ENCODE measurements at regions of chr18 and their contacts with region 1.

Region 1: DNA sequence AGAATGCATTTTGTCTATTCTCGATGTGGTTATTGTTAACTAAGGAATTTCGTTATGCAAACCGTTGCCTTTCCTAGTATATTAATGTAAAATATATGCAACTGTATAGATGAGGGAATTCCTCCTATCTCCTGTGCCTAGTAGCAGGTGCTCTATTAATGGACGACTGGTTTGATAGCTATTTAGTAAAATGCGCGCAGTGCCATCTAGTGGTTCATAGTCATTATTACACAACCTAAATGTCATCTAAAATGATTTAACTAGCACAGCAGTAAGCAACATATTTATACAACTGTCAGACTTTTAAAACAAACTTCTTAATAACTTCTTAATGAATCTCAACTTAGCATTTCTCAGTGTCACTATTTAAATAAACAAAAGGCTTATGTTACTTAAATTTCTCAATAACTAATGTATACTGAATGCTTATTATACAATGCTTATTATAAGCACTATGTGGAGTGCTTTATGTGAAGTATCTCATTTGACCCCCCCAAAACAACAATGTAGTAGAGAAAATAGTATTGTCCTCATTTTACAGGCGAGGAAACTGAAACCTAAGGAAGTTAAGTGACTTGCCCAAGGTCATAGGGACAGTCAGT is 77.9 kb downstream of the DTNA start:
- DNase-seq: no peak
- H3K4me3 ChIP-seq: no peak overlapping the region
- H3K27ac ChIP-seq: no peak overlapping the region
- H3K4me1 ChIP-seq: no peaks in the 10 kb centered on the region
- H3K27me3 ChIP-seq: peaks cover 0 to 4% (median 0%) of the 10 kb centered on the region in 4 donors
- CTCF ChIP-seq: peak; percentile 39 to 76 (median 72)
- POLR2A ChIP-seq: no peak

Region 2: GRCh38 chr18:34661464-34662111 is 126.4 kb before region 1 on chr18:
- intact Hi-C with region 1: loop called (anchors 10 kb)
- DNase-seq: no peak
- H3K4me3 ChIP-seq: no peak overlapping the region
- H3K27ac ChIP-seq: peak overlapping the region in 1 of 4 donors; percentile 61
- H3K4me1 ChIP-seq: peaks cover 0 to 23% (median 0%) of the 10 kb centered on the region in 3 donors
- H3K27me3 ChIP-seq: no peaks in the 10 kb centered on the region
- CTCF ChIP-seq: peak; percentile 34 to 72 (median 64)
- POLR2A ChIP-seq: no peak

Region 3: GRCh38 chr18:34718610-34719009 is 69.4 kb before region 1 on chr18:
- intact Hi-C with region 1: no loop called
- DNase-seq: no peak
- H3K4me3 ChIP-seq: no peak overlapping the region
- H3K27ac ChIP-seq: no peak overlapping the region
- H3K4me1 ChIP-seq: no peaks in the 10 kb centered on the region
- H3K27me3 ChIP-seq: no peaks in the 10 kb centered on the region
- CTCF ChIP-seq: no peak
- POLR2A ChIP-seq: no peak

Measured in esophagus squamous epithelium (tissue), 5 donors.